ENCODE measurements at regions of chr9 and their contacts with region 1.

Region 1: GRCh38 chr9:87684627-87685219 is 41.2 kb upstream of the CTSL start:
- DNase-seq: peak; percentile 39
- ATAC-seq: peak; percentile 7 to 31

Region 2: DNA sequence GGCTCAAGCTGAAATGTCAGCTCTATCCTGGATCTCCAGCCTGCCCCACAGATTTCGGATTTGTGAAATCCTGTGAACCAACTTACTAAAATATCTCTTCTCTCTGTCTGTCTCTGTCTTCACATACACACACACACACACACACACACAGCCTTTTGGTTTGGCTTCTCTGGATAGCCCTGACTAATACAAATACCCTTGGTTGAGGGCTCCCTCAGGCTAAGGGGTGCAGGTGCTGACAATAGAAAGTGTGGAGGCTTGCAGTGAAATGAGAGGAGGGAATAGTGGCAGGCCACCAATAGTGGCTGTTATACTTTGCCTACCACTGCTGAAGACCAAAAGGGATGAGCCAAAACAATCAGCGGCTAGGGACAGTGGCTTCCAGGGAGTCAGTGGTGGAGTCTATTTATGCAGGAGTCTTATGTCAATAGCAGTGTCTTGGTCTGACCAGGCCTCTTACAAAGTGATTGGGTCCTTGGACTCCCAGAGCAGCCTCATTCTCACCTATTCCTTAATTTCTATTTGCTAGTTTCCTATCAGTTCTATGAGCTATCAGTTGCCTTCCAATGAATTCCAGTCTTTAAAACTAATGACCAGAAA is 644.2 kb before region 1 on chr9:
- intact Hi-C with region 1: no loop called
- DNase-seq: no peak
- ATAC-seq: no peak

Region 3: DNA sequence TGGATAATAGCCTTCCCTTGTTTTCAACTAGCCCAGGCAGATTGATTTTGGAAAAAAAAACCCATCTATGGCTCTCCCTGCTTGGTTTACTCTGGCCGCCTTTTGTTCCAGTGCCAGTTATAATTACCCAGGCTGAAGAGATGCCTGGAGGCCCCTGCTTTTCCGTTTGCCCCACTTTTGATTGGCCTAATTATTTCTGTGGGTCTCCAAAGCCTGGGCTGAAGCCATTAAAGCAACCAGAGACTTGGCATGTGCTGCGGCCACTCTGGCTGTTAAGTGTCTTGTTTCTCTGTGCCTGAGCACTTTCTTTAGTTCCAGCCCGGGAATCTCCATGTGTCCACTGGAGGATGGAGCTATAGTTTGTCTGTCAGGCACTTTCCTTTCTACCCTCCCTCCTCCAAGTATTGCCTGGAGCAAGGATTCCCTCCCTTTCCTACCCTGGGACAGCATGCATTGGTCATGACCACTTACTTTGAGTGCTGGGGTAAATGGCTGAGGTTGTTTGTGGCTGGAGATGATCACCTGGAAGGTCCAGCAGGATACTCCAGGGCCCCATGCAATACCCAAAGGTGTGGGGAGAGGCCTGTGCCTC is 63.9 kb before region 1 on chr9:
- intact Hi-C with region 1: no loop called
- DNase-seq: no peak
- ATAC-seq: no peak

Region 4: DNA sequence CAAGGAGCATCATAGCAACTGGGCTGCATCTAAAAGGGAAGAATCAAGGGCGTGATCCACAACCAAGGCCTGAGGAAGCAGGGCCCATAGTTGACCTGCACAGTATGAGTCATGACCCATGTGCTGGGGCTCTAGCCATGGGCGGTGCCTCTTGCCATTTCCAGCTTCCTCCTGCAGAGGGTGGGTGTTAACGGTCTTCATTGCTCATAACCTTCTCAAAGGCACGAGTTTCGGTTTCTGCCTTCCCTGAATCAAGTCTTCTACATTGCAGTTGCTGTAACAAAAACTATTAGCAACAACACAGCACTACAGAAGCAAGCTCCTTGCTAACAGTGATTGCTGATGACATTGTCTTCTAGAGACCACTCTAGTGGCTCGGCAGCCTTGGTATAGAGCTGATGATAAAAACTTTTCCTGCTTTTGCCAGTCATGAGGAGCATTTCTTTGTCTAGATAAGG is 108.1 kb after region 1 on chr9:
- intact Hi-C with region 1: no loop called
- DNase-seq: peak; percentile 74
- ATAC-seq: peak; percentile 82 to 97

Region 5: DNA sequence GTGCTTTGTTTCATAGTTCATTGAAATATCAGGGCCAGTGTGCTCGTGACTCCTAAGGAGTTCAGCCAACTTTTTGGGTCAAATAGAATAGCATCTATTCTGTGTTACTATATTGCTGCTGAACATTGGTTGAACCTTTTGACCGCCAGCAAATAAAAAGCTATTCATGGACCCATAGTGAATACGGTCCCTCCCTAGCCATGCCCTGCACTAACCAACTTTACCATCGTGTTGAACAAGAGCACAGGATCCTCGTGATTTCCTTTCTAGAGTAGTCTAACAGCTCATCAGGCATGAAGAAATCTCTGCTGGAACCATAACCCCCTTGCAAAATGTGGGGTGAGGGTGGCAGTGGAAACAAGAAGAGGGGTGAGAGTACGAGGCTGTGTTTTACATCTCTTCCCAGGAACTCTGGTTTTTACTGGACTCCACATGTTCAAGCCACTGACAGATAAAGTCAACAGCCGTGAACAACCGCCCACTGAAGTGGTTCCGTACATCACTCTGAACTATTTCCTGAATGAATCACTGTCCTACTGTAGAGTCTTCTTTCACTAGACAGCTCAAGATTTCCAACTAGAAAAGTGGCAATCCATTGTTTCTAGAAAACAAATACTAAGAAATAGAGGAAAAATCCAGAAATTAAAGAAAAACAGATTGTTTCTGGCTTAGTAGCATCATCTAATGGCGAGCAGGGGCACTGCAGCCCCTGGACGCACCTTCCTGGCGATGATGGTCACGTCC is 127.8 kb after region 1 on chr9:
- intact Hi-C with region 1: loop called (anchors 5 kb)
- DNase-seq: no peak
- ATAC-seq: peak in 1 of 2 donors; percentile 33

Region 6: DNA sequence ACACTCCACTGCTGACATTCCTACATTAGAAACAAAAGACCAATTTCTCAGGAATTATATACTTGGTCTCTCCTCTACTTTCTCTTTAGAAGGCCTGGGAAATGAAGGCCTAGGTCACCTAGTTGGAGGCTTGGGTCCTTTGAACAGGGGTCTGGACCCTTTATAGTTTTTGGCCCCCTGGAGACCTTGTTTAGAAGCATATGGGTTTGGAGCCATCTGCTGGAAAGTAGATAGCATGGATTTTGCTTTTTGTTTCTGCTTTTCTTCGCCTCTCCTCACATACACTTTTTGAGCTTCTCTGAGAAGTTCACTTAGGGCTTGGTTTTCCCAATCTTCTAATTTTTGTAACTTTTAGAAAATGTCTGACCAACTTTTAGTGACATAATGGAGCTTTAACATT is 356.7 kb after region 1 on chr9:
- intact Hi-C with region 1: loop called (anchors 2 to 5 kb)
- DNase-seq: no peak
- ATAC-seq: no peak

Measured in left cardiac atrium (tissue), 4 donors.